ENCODE measurements at regions of chr1 and their contacts with region 1.

Region 1: DNA sequence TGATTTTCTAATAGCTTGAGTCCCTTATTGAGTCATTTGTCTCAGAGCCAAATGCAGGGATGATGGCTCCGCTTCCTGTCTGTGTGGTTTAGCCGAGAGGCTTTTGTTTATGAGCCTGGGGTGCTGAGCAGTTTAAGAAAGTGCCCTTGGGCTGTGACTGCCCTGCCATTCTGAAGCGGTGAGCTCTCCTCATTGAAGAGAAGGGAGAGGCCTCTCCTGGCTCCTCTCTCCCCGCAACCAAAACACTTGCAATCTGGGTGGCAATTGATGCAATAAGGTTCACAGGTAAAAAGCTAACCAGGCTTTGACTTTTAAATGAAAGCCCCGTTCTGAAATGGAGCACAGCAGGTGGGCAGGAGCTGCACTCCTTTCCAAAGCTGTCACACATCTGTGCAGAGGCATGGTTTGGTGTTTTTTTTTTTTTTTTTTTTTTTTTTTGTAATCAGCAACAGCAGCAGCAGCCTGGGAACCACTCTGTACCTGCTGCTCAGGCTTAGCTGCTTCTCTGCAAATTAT is 403.7 kb downstream of the SIPA1L2 start:
- DNase-seq: peak; percentile 96
- H3K4me3 Mint-ChIP-seq: peak overlapping the region; percentile 5
- H3K27ac Mint-ChIP-seq: peak overlapping the region; percentile 10
- H3K4me1 Mint-ChIP-seq: peaks cover 52% of the 10 kb centered on the region
- H3K27me3 Mint-ChIP-seq: no peaks in the 10 kb centered on the region
- CTCF ChIP-seq: no peak

Region 2: DNA sequence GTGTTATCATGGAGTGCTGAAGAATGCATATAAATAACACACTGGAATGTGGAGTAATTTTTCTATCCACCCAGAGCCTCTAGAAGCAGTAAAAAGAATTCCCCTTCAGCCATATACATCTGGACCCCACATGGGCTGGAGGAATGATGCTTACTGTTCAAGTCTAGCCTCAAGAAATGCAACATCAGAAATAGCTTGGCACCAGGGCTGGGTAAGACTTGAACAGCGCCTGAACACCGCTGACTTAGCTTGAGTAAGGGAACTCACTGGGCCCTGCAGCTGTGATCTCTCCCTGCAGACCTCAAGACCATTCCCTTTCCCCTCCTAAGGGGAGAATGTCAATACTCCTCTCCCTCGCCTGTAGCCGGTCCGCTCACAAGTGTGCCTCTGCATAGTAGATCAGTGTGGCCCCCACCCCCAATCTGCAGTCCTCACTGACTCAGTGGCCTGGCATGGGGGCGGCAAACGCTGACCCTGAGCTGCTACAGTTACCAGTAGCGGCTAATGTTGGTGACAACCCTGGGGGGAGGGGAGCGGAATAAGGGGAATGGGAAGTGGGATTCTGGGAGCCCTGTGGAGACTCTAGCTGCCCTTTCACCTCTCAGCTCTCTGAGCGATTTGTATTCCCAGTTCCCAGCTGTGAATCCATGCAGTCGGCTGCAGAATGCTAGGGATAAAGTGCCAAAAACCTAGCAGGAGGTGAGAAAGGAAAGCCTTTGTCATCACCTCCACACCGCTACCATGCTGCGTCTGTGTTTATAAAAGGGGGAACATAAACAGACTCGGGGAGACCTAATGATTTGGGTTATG is 115.8 kb before region 1 on chr1:
- CTCF ChIA-PET with region 1: no interaction called
- POLR2A ChIA-PET with region 1: no interaction called
- intact Hi-C with region 1: no loop called
- DNase-seq: no peak
- H3K4me3 Mint-ChIP-seq: no peak overlapping the region
- H3K27ac Mint-ChIP-seq: no peak overlapping the region
- H3K4me1 Mint-ChIP-seq: no peaks in the 10 kb centered on the region
- H3K27me3 Mint-ChIP-seq: no peaks in the 10 kb centered on the region
- CTCF ChIP-seq: no peak

Region 3: GRCh38 chr1:232127190-232127589 is 99.1 kb before region 1 on chr1:
- CTCF ChIA-PET with region 1: interaction called, 5 read pairs
- POLR2A ChIA-PET with region 1: interaction called, 12 read pairs
- intact Hi-C with region 1: no loop called
- DNase-seq: peak; percentile 88
- H3K4me3 Mint-ChIP-seq: no peak overlapping the region
- H3K27ac Mint-ChIP-seq: peak overlapping the region; percentile 32
- H3K4me1 Mint-ChIP-seq: peaks cover 51% of the 10 kb centered on the region
- H3K27me3 Mint-ChIP-seq: no peaks in the 10 kb centered on the region
- CTCF ChIP-seq: no peak

Region 4: GRCh38 chr1:232149287-232150201 is 76.7 kb before region 1 on chr1:
- CTCF ChIA-PET with region 1: interaction called, 3 read pairs
- POLR2A ChIA-PET with region 1: interaction called, 16 read pairs
- intact Hi-C with region 1: no loop called
- DNase-seq: peak; percentile 72
- H3K4me3 Mint-ChIP-seq: no peak overlapping the region
- H3K27ac Mint-ChIP-seq: peak overlapping the region; percentile 52
- H3K4me1 Mint-ChIP-seq: peaks cover 14% of the 10 kb centered on the region
- H3K27me3 Mint-ChIP-seq: no peaks in the 10 kb centered on the region
- CTCF ChIP-seq: no peak

Region 5: DNA sequence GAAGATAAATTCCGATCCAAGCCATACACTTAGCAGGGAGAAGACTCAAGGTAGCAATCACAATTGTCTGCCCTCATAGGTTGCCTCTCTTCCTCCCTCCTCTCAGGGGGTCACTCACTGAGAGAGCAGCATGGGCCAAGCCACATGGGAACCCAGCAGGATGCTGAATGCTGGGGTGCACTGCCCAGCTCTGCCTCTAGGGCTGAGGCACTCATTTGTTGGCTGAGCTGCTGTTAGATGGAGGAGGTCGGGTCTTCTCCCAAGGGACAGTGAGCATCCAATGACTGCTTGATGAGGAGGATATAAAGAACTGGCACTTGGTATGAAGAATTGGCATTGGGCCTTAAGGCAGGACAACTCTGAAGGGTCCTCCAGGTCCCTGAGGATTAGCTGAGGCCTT is 15.1 kb before region 1 on chr1:
- CTCF ChIA-PET with region 1: interaction called, 4 read pairs
- POLR2A ChIA-PET with region 1: interaction called, 17 read pairs
- intact Hi-C with region 1: no loop called
- DNase-seq: peak; percentile 44
- H3K4me3 Mint-ChIP-seq: no peak overlapping the region
- H3K27ac Mint-ChIP-seq: no peak overlapping the region
- H3K4me1 Mint-ChIP-seq: no peaks in the 10 kb centered on the region
- H3K27me3 Mint-ChIP-seq: no peaks in the 10 kb centered on the region
- CTCF ChIP-seq: peak; percentile 63

Region 6: GRCh38 chr1:232519186-232519585 is 292.9 kb after region 1 on chr1:
- CTCF ChIA-PET with region 1: no interaction called
- POLR2A ChIA-PET with region 1: interaction called, 4 read pairs
- intact Hi-C with region 1: loop called (anchors 10 kb)
- DNase-seq: no peak
- H3K4me3 Mint-ChIP-seq: no peak overlapping the region
- H3K27ac Mint-ChIP-seq: no peak overlapping the region
- H3K4me1 Mint-ChIP-seq: peaks cover 18% of the 10 kb centered on the region
- H3K27me3 Mint-ChIP-seq: no peaks in the 10 kb centered on the region
- CTCF ChIP-seq: no peak

Measured in MCF 10A (cell line).